Esophagus muscularis mucosa (tissue), 4 donors: ENCODE measurements at regions of chr15 and their contacts with region 1.

Region 1: DNA sequence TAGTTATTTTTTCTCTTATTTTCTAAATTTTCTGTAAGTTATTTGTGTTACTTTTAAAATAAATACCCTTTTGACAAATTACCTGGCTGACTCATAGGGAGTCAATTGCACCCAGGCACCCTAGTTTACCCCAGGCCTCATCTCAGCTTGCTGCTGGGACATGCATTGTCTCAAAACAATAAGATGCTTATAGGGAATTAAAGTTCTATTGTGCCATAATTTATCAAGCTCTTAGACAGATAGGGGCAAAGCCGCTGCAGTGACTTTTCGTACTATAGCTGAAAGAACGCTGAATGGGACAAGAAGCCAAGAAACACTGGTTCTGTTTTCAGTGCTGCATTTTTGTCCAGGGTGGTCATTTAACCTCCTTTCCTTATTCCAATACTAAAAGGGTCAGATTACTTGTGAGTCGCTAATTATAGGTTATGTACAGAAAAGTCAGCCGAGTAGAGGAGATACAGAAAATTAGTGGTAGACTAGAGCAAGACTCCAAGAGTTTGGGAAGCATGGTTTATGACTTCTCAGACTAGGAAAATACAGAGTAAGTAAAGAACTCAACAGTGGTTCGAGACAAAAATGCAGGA is 50.3 kb downstream of the EXD1 start:
- DNase-seq: no peak
- H3K4me3 ChIP-seq: no peak overlapping the region
- H3K27ac ChIP-seq: no peak overlapping the region
- H3K4me1 ChIP-seq: no peaks in the 10 kb centered on the region
- H3K27me3 ChIP-seq: peaks cover 0 to 8% (median 0%) of the 10 kb centered on the region in 4 donors
- CTCF ChIP-seq: no peak
- EP300 ChIP-seq: no peak
- POLR2A ChIP-seq: no peak

Region 2: DNA sequence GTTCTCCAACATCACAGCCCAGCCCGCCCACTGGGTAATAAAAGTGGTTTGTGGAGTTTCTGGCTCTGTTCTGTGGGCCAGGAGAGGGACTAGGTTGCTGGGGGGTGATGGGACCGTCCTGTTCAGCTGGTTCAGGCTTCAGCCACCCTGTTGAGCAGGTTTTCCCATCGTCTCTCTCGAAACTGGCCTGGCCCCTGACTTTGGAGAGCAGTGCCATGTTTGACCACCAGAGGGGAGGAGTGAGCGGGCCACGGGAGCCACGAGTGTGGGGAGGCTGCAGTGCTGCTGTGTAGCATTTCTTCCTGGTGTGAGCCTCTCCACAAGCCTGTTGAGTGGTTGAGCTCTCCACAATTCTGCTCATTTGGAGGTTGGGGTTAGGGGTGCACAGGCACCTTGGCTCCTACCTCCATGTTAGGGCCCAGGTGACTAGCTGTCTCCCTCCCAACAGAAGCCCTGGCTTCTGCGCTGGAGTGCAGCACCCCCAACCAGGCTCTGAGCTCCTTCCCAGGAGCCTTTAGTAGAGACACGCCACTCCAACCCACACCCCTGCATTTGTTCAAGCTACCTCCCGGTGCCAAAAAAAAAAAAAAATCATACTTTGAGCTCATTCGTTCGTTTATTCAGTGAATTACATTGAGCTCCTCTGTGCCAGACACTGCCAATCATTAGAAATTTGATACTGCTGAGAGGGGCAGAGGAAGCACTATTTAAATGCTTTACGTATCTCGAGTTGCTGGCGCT is 322.5 kb before region 1 on chr15:
- intact Hi-C with region 1: loop called (anchors 5 kb)
- DNase-seq: peak; percentile 95
- H3K4me3 ChIP-seq: no peak overlapping the region
- H3K27ac ChIP-seq: no peak overlapping the region
- H3K4me1 ChIP-seq: peaks cover 0 to 14% (median 6%) of the 10 kb centered on the region in 4 donors
- H3K27me3 ChIP-seq: peaks cover 0 to 53% (median 0%) of the 10 kb centered on the region in 4 donors
- CTCF ChIP-seq: peak in 2 of 3 experiments; percentile 91 to 92
- EP300 ChIP-seq: no peak
- POLR2A ChIP-seq: no peak

Region 3: GRCh38 chr15:40878785-40879184 is 301.5 kb before region 1 on chr15:
- intact Hi-C with region 1: no loop called
- DNase-seq: no peak
- H3K4me3 ChIP-seq: no peak overlapping the region
- H3K27ac ChIP-seq: no peak overlapping the region
- H3K4me1 ChIP-seq: peaks cover 6 to 7% (median 7%) of the 10 kb centered on the region in 4 donors
- H3K27me3 ChIP-seq: peaks cover 0 to 5% (median 2%) of the 10 kb centered on the region in 4 donors
- CTCF ChIP-seq: no peak
- EP300 ChIP-seq: no peak
- POLR2A ChIP-seq: no peak

Region 4: GRCh38 chr15:41546846-41547786 is 366.8 kb after region 1 on chr15:
- intact Hi-C with region 1: no loop called
- DNase-seq: no peak
- H3K4me3 ChIP-seq: no peak overlapping the region
- H3K27ac ChIP-seq: no peak overlapping the region
- H3K4me1 ChIP-seq: peaks cover 9 to 19% (median 16%) of the 10 kb centered on the region in 4 donors
- H3K27me3 ChIP-seq: no peaks in the 10 kb centered on the region
- CTCF ChIP-seq: no peak
- EP300 ChIP-seq: no peak
- POLR2A ChIP-seq: no peak